ENCODE measurements at regions of chr11 and their contacts with region 1.

Region 1: DNA sequence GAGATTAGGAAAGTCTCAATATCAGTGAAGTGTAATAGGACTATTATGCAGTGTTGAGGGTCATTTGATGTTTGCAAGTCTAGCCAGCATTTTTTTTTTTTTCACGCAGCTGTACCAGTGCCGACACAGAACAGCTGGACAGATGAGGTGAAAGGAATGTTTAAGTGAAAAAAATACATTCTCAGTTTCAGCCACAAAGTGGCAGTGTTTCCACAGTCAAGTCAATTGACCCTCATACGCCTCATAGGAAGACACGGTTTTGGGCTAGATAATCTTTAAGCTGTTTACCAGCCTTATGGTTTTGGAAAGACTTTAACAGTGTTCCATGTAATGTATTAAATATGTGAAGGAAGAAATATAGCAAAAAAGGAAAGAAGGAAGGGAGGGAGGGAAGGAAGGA is 349.9 kb upstream of the ANO3 start:
- DNase-seq: peak; percentile 12
- H3K4me3 ChIP-seq: no peak overlapping the region
- CTCF ChIP-seq: peak; percentile 45

Region 2: DNA sequence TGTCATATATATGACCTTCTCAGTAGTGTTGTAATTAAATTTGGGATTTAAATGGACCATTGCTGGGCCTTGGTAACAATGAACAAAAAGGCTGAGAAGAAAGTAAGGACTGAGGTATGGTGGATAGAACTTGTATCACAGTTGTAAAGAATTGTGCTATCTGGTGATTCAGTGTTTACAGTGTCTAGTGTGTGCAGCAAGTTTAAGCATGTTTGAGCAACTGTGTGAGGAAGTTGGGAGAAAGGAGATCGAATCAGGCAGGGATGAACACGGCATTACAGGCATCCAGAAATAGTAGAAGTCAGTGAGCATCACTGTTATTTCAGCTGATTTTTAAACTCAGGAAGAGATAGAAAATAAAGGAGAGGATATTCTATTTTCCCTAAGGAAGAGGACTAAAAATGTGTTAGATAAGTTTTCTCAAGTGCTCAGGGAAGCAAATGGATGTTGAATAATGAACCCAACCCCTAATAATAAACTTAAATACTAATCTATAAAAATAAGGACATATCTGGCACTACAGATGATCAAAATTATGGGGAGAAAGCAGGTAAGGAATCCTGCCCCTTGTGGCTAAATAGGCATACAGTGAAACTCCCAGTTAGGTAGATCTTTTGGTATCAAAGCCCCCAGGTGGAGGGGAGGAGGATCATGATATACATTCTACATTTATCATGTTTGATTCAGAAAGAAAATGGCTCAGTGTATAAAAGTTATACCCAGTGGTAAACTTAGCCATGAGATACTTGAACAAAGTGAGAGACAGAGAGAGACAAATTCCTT is 11.1 kb before region 1 on chr11:
- CTCF ChIA-PET with region 1: interaction called, 34 read pairs
- POLR2A ChIA-PET with region 1: no interaction called
- DNase-seq: no peak
- H3K4me3 ChIP-seq: no peak overlapping the region
- CTCF ChIP-seq: peak; percentile 18

Region 3: GRCh38 chr11:26011474-26011873 is 29.5 kb after region 1 on chr11:
- CTCF ChIA-PET with region 1: interaction called, 13 read pairs
- POLR2A ChIA-PET with region 1: no interaction called
- DNase-seq: no peak
- H3K4me3 ChIP-seq: no peak overlapping the region
- CTCF ChIP-seq: no peak

Region 4: GRCh38 chr11:26106726-26107125 is 124.7 kb after region 1 on chr11:
- CTCF ChIA-PET with region 1: no interaction called
- POLR2A ChIA-PET with region 1: no interaction called
- DNase-seq: no peak
- H3K4me3 ChIP-seq: no peak overlapping the region
- CTCF ChIP-seq: no peak

Region 5: GRCh38 chr11:26219183-26220117 is 237.5 kb after region 1 on chr11:
- CTCF ChIA-PET with region 1: interaction called, 126 read pairs
- POLR2A ChIA-PET with region 1: no interaction called
- DNase-seq: no peak
- H3K4me3 ChIP-seq: no peak overlapping the region
- CTCF ChIP-seq: no peak

Region 6: DNA sequence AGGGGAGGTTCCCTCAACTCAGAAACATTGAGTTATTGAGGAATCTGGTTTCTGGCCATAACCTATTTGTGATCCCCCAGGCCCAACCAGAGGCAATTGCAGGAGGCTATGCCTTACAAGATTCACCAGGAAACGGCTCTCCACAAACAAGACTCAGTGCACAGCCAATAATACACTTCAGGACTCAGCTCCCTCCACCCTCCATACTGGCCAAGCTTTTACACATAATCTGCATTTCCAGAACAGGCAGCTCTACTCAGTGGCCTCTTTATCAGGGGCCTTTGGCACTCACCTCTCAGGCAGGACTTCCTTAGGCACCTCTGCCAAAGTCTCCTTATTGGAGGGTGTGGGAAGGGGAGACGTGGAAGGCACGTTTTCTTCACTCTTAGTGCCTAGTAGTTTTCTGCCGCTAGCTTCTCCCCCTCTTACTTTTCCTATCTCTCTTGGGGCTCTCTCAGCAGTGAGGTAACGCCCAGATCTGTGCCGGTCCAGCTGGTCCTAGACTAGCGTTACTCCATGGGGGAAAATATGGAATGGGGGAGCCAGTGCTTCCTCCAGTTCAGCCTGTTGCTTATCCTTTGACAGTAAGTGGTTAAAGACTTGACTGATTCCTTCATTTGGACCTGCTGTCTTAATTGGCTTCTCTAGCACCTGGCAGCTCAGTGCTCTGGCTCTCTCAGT is 287.1 kb after region 1 on chr11:
- CTCF ChIA-PET with region 1: interaction called, 52 read pairs
- POLR2A ChIA-PET with region 1: no interaction called
- DNase-seq: no peak
- H3K4me3 ChIP-seq: no peak overlapping the region
- CTCF ChIP-seq: no peak

Region 7: GRCh38 chr11:26286472-26287066 is 304.6 kb after region 1 on chr11:
- CTCF ChIA-PET with region 1: interaction called, 16 read pairs
- POLR2A ChIA-PET with region 1: no interaction called
- DNase-seq: no peak
- H3K4me3 ChIP-seq: no peak overlapping the region
- CTCF ChIP-seq: peak; percentile 50

Measured in AG04449 (cell line).